ENCODE measurements at regions of chr19 and their contacts with region 1.

Region 1: DNA sequence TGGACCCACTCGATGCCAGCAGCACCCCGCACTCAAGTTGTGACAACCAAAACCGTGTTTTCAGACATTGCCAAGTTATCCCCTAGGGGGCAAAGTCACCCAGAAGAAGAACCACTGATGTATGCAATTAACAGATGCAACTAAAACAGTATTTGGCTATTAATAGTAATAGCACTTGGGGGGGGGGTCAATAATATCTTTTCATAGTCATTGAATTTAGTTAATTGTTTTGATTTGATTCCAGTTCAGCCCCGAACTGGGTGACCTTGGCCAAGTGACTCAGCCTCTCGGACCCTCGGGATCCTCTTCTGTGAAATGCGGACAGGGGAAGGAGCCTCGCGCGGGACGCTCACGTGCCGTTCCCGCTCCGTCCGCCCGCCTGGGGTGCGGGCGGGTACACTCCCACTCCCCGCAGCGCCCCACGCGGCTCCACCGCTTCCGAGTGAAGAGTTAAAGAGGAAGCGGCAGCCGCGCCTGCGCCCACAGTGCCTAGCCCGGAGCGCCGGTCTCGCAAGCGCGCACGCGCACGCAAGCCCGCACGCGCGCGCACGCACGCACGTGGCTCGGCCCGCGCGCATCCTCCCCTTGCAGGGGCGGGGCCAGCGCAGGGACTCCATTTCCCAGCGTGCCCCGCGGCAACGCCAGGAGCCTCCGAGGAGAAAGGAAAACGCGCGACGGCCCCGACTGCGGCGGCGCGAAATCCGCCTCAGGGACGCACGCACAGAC is 449 bp upstream of the DAZAP1 start:
- DNase-seq: peak; percentile 98 to 100 (median 99)
- ATAC-seq: peak; percentile 79
- H3K4me3 ChIP-seq: peak overlapping the region; percentile 51
- H3K4me3 Mint-ChIP-seq: peak overlapping the region; percentile 92
- H3K27ac ChIP-seq: peak overlapping the region; percentile 52 to 73
- H3K27ac Mint-ChIP-seq: peak overlapping the region; percentile 78
- H3K4me1 ChIP-seq: peaks cover 56% of the 10 kb centered on the region
- H3K4me1 Mint-ChIP-seq: peaks cover 46% of the 10 kb centered on the region
- H3K27me3 ChIP-seq: peaks cover 0 to 11% of the 10 kb centered on the region in 2 experiments
- H3K27me3 Mint-ChIP-seq: no peaks in the 10 kb centered on the region
- CTCF ChIP-seq: peak; percentile 62

Region 2: DNA sequence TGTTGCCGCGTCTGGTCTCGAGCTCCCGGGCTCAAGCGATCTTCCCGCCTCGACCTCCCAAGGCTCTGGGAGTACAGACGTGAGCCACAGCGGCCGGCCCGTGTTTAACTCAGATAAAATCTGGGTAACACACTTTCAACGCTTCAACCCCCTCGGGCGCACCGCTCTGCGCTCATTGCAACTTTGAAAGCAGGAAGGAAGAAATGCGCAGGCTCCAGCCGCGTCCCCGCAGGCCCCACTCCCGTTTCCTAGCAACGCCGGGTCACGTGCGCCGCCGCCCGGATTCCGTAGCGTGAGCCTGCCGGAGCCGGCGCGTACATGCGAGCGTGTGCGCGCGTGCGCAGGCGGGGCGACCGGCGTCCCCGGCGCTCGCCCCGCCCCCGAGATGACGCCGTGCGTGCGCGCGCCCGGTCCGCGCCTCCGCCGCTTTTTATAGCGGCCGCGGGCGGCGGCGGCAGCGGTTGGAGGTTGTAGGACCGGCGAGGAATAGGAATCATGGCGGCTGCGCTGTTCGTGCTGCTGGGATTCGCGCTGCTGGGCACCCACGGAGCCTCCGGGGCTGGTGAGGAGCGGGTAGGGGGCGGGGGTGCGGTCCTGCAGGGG is 834.7 kb before region 1 on chr19 and contains the start of gene BSG:
- CTCF ChIA-PET with region 1: no interaction called
- POLR2A ChIA-PET with region 1: no interaction called
- intact Hi-C with region 1: loop called in 1 of 2 experiments (anchors 5 kb)
- DNase-seq: peak; percentile 97 to 100 (median 98)
- ATAC-seq: peak; percentile 83
- H3K4me3 ChIP-seq: peak within 1 kb of the TSS; percentile 94
- H3K4me3 Mint-ChIP-seq: peak within 1 kb of the TSS; percentile 99
- H3K27ac ChIP-seq: peak within 1 kb of the TSS; percentile 69 to 87
- H3K27ac Mint-ChIP-seq: peak within 1 kb of the TSS; percentile 95
- H3K4me1 ChIP-seq: peaks cover 60% of the 10 kb centered on the region
- H3K4me1 Mint-ChIP-seq: peaks cover 40% of the 10 kb centered on the region
- H3K27me3 ChIP-seq: no peaks in the 10 kb centered on the region
- H3K27me3 Mint-ChIP-seq: no peaks in the 10 kb centered on the region
- CTCF ChIP-seq: no peak
- total RNA-seq, gene BSG: 68.7 to 71.6 TPM

Region 3: GRCh38 chr19:1383311-1384084 is 23.4 kb before region 1 on chr19 and contains the start of gene NDUFS7:
- CTCF ChIA-PET with region 1: no interaction called
- POLR2A ChIA-PET with region 1: interaction called, 4 read pairs
- intact Hi-C with region 1: loop called (anchors 1 kb)
- DNase-seq: peak; percentile 85 to 100 (median 94)
- ATAC-seq: peak; percentile 90
- H3K4me3 ChIP-seq: peak within 1 kb of the TSS; percentile 92
- H3K4me3 Mint-ChIP-seq: peak within 1 kb of the TSS; percentile 97
- H3K27ac ChIP-seq: peak within 1 kb of the TSS; percentile 70 to 87
- H3K27ac Mint-ChIP-seq: peak within 1 kb of the TSS; percentile 98
- H3K4me1 ChIP-seq: peaks cover 34% of the 10 kb centered on the region
- H3K4me1 Mint-ChIP-seq: peaks cover 19% of the 10 kb centered on the region
- H3K27me3 ChIP-seq: no peaks in the 10 kb centered on the region
- H3K27me3 Mint-ChIP-seq: peaks cover 11% of the 10 kb centered on the region
- CTCF ChIP-seq: no peak
- total RNA-seq, gene NDUFS7: 40.0 to 42.6 TPM

Region 4: DNA sequence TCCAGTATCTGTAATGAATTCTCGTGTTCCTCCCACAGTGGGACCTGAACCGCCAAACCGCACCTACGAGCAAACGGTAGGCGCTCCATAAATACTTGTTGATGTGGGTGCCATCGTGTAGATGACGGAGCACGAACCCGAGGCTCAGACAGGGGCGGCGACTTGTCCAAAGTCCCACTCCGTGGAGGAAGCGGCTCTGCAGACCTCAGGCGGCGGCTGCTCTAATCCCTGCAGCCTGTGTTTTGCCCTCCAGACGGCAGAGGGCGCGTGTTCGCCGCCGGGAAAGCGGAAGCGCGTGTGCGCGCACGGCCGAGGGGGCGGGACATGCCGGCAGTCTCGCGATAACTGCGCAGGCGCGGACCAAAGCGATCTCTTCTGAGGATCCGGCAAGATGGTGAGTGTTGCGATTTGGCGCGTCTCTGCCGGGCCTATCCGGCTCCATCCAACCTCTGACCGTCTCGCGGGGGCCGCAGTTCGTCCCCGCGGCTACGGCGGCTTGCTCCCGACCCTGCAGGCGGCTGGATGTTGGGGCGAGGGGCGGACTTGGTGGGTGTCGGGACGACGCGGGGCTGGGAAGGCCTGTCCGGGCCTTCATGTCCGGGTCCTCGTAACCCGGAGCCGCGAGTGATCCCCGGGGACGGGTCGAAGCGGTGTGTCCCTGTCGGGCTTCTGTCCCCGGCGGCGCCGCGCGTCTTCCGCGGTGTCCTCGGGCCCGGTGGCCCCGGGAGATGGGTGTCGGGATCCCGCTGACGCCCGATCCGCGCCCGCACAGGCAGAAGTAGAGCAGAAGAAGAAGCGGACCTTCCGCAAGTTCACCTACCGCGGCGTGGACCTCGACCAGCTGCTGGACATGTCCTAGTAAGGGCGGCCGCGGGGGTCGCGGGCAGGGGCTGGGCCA is 31.3 kb after region 1 on chr19 and contains the start of gene RPS15:
- CTCF ChIA-PET with region 1: no interaction called
- POLR2A ChIA-PET with region 1: interaction called, 3 read pairs
- intact Hi-C with region 1: loop called (anchors 1 kb)
- DNase-seq: peak; percentile 93 to 99 (median 96)
- ATAC-seq: peak; percentile 88
- H3K4me3 ChIP-seq: peak within 1 kb of the TSS; percentile 96
- H3K4me3 Mint-ChIP-seq: peak within 1 kb of the TSS; percentile 100
- H3K27ac ChIP-seq: peak within 1 kb of the TSS; percentile 83 to 90
- H3K27ac Mint-ChIP-seq: peak within 1 kb of the TSS; percentile 92
- H3K4me1 ChIP-seq: peaks cover 32% of the 10 kb centered on the region
- H3K4me1 Mint-ChIP-seq: peaks cover 25% of the 10 kb centered on the region
- H3K27me3 ChIP-seq: no peaks in the 10 kb centered on the region
- H3K27me3 Mint-ChIP-seq: no peaks in the 10 kb centered on the region
- CTCF ChIP-seq: peak; percentile 97
- total RNA-seq, gene RPS15: 2,193 to 2,200 TPM

Region 5: DNA sequence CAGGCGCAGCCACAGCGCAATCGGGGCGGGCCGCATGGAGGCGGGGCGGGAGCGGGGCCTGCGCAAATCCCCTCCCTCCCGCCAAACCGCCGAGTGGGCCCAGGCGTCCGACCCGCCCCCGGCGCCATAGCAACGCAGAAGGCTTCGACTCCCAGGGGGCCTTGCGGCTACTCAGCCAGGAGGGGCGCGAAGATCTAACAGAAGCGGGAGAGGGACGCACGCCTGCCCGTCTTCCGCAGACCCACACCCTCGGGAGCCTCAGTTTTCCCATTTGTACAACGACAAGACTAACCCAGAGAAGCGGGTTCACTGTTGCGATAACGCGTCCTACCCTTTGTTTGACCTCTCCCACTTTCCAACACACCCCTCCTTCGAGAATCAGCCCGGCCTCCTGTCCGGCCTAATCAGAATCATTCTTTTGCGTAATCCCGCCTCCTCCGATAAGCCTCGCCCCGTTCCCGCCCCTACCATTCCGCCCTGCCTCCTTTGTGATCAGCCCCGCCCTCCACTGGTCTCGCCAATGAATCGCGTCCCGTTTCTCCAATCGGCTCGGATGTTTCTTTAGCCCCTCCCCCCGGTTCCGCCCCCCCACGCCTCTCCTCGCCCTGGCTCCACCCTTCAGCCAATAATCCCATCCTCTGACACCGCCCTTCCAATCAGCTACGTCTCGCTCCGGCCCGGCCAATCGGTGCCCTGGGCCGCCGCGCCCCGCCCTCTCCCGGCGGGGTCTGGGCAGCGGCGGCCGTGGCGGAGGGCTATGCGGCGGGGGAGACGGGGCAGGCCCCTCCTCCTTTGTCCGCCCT is 83.6 kb after region 1 on chr19 and contains the start of gene PCSK4:
- CTCF ChIA-PET with region 1: no interaction called
- POLR2A ChIA-PET with region 1: no interaction called
- intact Hi-C with region 1: loop called in 1 of 2 experiments (anchors 2 kb)
- DNase-seq: peak; percentile 96 to 99 (median 98)
- ATAC-seq: peak; percentile 86
- H3K4me3 ChIP-seq: peak within 1 kb of the TSS; percentile 61
- H3K4me3 Mint-ChIP-seq: peak within 1 kb of the TSS; percentile 84
- H3K27ac ChIP-seq: peak within 1 kb of the TSS; percentile 29 to 34
- H3K27ac Mint-ChIP-seq: peak within 1 kb of the TSS; percentile 60
- H3K4me1 ChIP-seq: peaks cover 23% of the 10 kb centered on the region
- H3K4me1 Mint-ChIP-seq: peaks cover 12% of the 10 kb centered on the region
- H3K27me3 ChIP-seq: no peaks in the 10 kb centered on the region
- H3K27me3 Mint-ChIP-seq: no peaks in the 10 kb centered on the region
- CTCF ChIP-seq: no peak
- total RNA-seq, gene PCSK4: 4.2 to 5.2 TPM

Region 6: DNA sequence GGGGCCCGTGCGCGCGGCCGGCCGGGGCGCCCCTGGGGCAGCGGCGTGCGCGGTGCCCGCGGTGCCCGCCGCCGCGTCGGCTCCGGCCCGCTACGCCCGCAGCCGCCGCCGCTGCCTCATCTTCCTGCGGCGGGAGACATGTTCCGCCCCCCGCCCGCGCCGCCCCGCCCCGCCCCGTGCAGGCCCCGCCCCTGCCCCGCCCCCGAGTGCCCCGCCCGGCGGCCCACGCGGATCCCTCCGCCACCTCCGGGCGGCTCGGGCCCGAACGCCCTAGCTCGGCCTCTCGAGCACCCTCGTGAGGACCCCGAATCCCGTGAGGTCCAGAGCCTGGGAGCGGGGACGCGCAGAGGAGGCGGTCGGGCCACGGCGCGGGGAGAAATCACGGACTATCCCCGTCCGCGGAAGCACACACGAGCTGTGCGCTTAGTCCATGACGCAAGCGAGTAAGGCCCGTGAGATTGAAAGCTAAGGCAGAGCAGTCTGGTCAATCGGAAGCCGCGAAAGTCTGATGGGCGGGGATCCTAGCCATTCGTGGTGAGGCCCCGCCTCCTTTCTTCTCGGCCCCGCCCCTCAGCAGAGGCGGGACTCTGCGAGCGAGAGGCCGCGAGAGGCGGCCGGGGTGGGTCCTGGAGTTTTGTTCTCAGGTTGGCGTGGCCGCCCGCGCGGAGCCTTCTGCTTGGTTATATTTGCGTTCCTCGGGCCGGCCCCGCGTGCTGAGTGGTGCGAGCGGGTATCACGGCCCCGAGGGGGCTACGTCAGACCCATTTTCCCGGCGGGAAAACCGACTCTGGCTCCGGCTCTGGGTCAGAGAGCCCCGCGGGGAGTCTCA is 245.7 kb after region 1 on chr19 and contains the start of gene TCF3:
- CTCF ChIA-PET with region 1: no interaction called
- POLR2A ChIA-PET with region 1: no interaction called
- intact Hi-C with region 1: loop called in 1 of 2 experiments (anchors 10 kb)
- DNase-seq: peak; percentile 97 to 99 (median 99)
- ATAC-seq: peak; percentile 90
- H3K4me3 ChIP-seq: peak within 1 kb of the TSS; percentile 63
- H3K4me3 Mint-ChIP-seq: peak within 1 kb of the TSS; percentile 97
- H3K27ac ChIP-seq: peak within 1 kb of the TSS; percentile 99
- H3K27ac Mint-ChIP-seq: peak within 1 kb of the TSS; percentile 98
- H3K4me1 ChIP-seq: peaks cover 26% of the 10 kb centered on the region
- H3K4me1 Mint-ChIP-seq: peaks cover 14% of the 10 kb centered on the region
- H3K27me3 ChIP-seq: no peaks in the 10 kb centered on the region
- H3K27me3 Mint-ChIP-seq: peaks cover 10% of the 10 kb centered on the region
- CTCF ChIP-seq: no peak
- total RNA-seq, gene TCF3: 51.2 to 52.2 TPM

Measured in CD4-positive, alpha-beta T cell (primary cell).